ENCODE measurements at regions of chr5 and their contacts with region 1.

Region 1: GRCh38 chr5:72366324-72366976 is 46.3 kb downstream of the PTCD2 start:
- H3K4me3 Mint-ChIP-seq: no peak overlapping the region
- H3K27ac Mint-ChIP-seq: peak overlapping the region; percentile 96
- H3K4me1 Mint-ChIP-seq: peaks cover 80% of the 10 kb centered on the region
- H3K27me3 Mint-ChIP-seq: no peaks in the 10 kb centered on the region

Region 2: DNA sequence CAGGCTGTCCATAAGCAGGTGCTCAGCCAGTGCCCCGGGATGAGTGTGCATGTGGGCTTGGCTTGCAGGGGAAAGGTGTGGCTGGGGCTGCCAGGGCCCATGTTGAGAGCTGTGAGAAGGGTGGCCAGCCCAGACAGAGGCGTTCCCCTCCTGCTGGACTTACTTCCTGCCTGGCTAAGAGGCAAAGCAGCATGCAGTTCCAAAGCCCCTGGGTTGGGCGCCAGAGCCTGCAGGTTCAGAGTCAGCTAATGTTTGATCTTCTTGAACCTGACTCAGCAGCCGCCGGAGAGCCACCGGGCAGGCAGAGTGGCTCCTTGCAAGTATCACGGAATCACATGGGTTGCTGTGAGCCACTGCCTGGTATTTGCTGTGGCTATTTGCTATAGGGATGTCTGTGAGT is 427.6 kb before region 1 on chr5:
- intact Hi-C with region 1: no loop called
- H3K4me3 Mint-ChIP-seq: no peak overlapping the region
- H3K27ac Mint-ChIP-seq: no peak overlapping the region
- H3K4me1 Mint-ChIP-seq: no peaks in the 10 kb centered on the region
- H3K27me3 Mint-ChIP-seq: peaks cover 7% of the 10 kb centered on the region

Region 3: GRCh38 chr5:72301557-72301956 is 64.9 kb before region 1 on chr5:
- intact Hi-C with region 1: no loop called
- H3K4me3 Mint-ChIP-seq: no peak overlapping the region
- H3K27ac Mint-ChIP-seq: no peak overlapping the region
- H3K4me1 Mint-ChIP-seq: peaks cover 10% of the 10 kb centered on the region
- H3K27me3 Mint-ChIP-seq: no peaks in the 10 kb centered on the region

Region 4: DNA sequence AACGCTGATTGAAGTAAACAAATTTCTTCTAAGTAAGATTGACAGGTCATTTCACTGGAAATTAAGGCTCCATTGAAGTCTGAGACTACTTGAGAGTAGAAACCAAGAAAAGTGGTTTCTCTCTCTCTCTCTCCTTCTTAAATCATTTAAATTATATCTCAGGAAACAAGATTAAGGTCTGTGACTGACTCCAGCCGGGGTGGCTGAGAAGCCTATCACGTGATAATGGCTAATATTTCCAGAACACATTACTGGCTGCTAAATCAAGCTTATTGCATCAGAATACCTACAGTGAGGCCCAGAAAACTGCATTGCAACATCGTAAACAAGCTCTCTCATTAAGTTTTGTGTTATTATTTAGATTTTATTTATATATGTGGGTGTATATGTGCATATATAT is 42.2 kb after region 1 on chr5:
- intact Hi-C with region 1: loop called (anchors 5 kb)
- H3K4me3 Mint-ChIP-seq: no peak overlapping the region
- H3K27ac Mint-ChIP-seq: no peak overlapping the region
- H3K4me1 Mint-ChIP-seq: peaks cover 17% of the 10 kb centered on the region
- H3K27me3 Mint-ChIP-seq: no peaks in the 10 kb centered on the region

Region 5: GRCh38 chr5:72465601-72466563 is 99.4 kb after region 1 on chr5:
- intact Hi-C with region 1: loop called (anchors 5 kb)
- H3K4me3 Mint-ChIP-seq: peak overlapping the region; percentile 61
- H3K27ac Mint-ChIP-seq: peak overlapping the region; percentile 92
- H3K4me1 Mint-ChIP-seq: peaks cover 69% of the 10 kb centered on the region
- H3K27me3 Mint-ChIP-seq: no peaks in the 10 kb centered on the region

Region 6: GRCh38 chr5:72523960-72524582 is 157.6 kb after region 1 on chr5:
- intact Hi-C with region 1: loop called (anchors 1 kb)
- H3K4me3 Mint-ChIP-seq: no peak overlapping the region
- H3K27ac Mint-ChIP-seq: no peak overlapping the region
- H3K4me1 Mint-ChIP-seq: peaks cover 31% of the 10 kb centered on the region
- H3K27me3 Mint-ChIP-seq: no peaks in the 10 kb centered on the region